Heart right ventricle (tissue), 16 donors: ENCODE measurements at regions of chr18 and their contacts with region 1.

Region 1: DNA sequence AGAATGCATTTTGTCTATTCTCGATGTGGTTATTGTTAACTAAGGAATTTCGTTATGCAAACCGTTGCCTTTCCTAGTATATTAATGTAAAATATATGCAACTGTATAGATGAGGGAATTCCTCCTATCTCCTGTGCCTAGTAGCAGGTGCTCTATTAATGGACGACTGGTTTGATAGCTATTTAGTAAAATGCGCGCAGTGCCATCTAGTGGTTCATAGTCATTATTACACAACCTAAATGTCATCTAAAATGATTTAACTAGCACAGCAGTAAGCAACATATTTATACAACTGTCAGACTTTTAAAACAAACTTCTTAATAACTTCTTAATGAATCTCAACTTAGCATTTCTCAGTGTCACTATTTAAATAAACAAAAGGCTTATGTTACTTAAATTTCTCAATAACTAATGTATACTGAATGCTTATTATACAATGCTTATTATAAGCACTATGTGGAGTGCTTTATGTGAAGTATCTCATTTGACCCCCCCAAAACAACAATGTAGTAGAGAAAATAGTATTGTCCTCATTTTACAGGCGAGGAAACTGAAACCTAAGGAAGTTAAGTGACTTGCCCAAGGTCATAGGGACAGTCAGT is 77.9 kb downstream of the DTNA start:
- DNase-seq: peak in 1 of 2 donors; percentile 40
- ATAC-seq: peak in 5 of 8 donors; percentile 66 to 74 (median 70)
- H3K4me3 ChIP-seq: no peak overlapping the region
- H3K27ac ChIP-seq: no peak overlapping the region
- H3K4me1 ChIP-seq: peaks cover 0 to 5% (median 0%) of the 10 kb centered on the region in 9 donors
- H3K27me3 ChIP-seq: no peaks in the 10 kb centered on the region
- CTCF ChIP-seq: peak; percentile 68 to 84 (median 77)

Region 2: DNA sequence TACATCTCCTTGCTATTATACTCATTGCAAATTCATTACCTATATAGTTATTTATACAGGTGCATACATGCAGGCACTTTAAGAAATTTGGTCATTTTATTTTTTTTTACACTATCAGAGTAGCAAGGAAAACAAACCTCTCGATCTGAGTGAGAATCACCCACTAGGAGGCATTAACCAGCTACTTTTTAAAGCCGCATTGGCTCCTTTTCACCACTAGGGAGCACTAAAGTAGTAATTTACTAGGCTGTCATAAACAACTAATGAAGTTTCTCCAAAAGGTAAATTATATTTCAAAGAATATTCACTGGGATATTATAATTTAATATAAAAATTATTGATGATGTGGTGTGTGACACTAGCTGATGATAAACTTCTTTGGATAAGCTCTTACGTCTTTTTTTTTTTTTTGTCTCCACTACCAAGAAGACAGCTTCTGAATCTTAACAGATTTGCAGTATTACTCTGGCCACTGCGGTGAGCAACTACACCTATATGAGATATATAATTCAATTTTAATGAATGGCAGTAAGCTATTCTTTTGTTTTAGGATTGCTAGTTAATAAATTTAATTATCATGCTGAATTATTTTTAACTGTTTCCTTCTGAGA is 665.2 kb before region 1 on chr18:
- intact Hi-C with region 1: loop called in 6 of 10 experiments (anchors 5 to 10 kb)
- DNase-seq: peak in 1 of 2 donors; percentile 7
- ATAC-seq: peak in 1 of 8 donors; percentile 61
- H3K4me3 ChIP-seq: no peak overlapping the region
- H3K27ac ChIP-seq: no peak overlapping the region
- H3K4me1 ChIP-seq: no peaks in the 10 kb centered on the region
- H3K27me3 ChIP-seq: no peaks in the 10 kb centered on the region
- CTCF ChIP-seq: peak; percentile 46 to 93 (median 79)

Region 3: GRCh38 chr18:34493099-34493544 is 294.9 kb before region 1 on chr18:
- intact Hi-C with region 1: loop called in 6 of 10 experiments (anchors 5 to 10 kb)
- DNase-seq: peak; percentile 74 to 85
- ATAC-seq: peak; percentile 87 to 96 (median 93)
- H3K4me3 ChIP-seq: peak overlapping the region; percentile 42 to 69 (median 65)
- H3K27ac ChIP-seq: peak overlapping the region; percentile 71 to 91 (median 84)
- H3K4me1 ChIP-seq: peaks cover 0 to 28% (median 10%) of the 10 kb centered on the region in 9 donors
- H3K27me3 ChIP-seq: peaks cover 0 to 40% (median 0%) of the 10 kb centered on the region in 7 donors
- CTCF ChIP-seq: no peak

Region 4: DNA sequence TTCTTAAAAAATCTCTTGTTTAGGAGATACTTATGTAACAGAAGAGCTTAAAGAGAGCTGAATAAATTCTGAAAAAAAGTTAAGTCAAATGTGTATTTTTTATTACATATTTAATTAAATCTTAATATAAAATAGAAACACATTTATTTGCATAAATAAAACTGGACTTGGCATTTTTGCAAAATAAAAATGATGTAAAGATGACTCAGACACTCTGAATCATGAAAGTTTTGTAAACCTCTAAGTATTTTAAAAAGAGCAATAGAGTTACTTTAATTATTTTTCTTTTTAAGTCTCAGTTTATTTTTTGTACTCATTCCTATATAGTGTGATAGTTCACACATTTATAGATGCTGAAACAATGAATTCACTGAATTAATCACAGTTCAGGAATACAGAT is 187.9 kb before region 1 on chr18:
- intact Hi-C with region 1: loop called in 4 of 10 experiments (anchors 5 to 10 kb)
- DNase-seq: no peak
- ATAC-seq: no peak
- H3K4me3 ChIP-seq: no peak overlapping the region
- H3K27ac ChIP-seq: no peak overlapping the region
- H3K4me1 ChIP-seq: peaks cover 0 to 27% (median 5%) of the 10 kb centered on the region in 9 donors
- H3K27me3 ChIP-seq: no peaks in the 10 kb centered on the region
- CTCF ChIP-seq: no peak

Region 5: DNA sequence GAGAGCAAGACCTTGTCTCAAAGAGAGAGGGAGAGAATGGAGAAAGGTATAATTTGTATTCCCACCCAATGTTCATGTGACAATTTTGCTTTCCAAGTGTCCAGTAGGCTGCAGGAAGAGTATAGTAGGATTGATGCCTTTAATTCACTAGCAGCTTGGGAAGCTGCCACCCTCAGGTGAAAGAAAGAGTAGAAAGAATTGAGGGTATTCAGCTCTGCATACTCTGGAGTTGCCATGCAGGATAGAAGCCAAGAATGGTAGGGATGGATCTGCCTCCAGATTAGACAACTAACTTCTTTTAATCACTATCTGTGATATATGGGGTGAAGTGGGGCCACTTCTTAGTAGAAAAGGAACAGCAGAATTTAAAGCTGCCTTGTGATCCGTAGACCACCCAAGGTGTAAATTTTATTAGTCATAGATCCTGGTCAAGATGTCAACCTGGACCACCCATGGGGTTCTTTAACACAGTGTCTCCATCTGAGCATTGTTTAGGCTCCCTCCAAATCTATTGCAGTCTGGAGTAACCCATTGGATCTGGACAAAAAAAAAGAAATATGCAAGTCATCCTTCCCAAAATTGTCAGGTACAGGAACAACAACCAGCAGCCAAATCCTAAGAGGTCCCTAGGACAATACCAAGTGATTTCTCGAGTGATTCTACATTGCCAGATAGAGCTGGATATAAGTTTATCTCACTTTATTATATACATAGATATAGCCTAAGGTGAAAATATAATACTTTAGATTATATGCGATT is 111.0 kb before region 1 on chr18:
- intact Hi-C with region 1: loop called in 2 of 10 experiments (anchors 10 kb)
- DNase-seq: no peak
- ATAC-seq: no peak
- H3K4me3 ChIP-seq: no peak overlapping the region
- H3K27ac ChIP-seq: no peak overlapping the region
- H3K4me1 ChIP-seq: peaks cover 0 to 14% (median 0%) of the 10 kb centered on the region in 9 donors
- H3K27me3 ChIP-seq: no peaks in the 10 kb centered on the region
- CTCF ChIP-seq: no peak

Region 6: GRCh38 chr18:34809451-34810072 is 21.5 kb after region 1 on chr18:
- intact Hi-C with region 1: no loop called
- DNase-seq: peak; percentile 29 to 41
- ATAC-seq: peak in 5 of 8 donors; percentile 34 to 70 (median 51)
- H3K4me3 ChIP-seq: no peak overlapping the region
- H3K27ac ChIP-seq: no peak overlapping the region
- H3K4me1 ChIP-seq: peaks cover 0 to 23% (median 6%) of the 10 kb centered on the region in 9 donors
- H3K27me3 ChIP-seq: no peaks in the 10 kb centered on the region
- CTCF ChIP-seq: peak; percentile 17 to 58 (median 47)

Region 7: GRCh38 chr18:35026407-35027061 is 238.5 kb after region 1 on chr18:
- intact Hi-C with region 1: no loop called
- DNase-seq: no peak
- ATAC-seq: peak in 3 of 8 donors; percentile 9 to 49 (median 30)
- H3K4me3 ChIP-seq: no peak overlapping the region
- H3K27ac ChIP-seq: no peak overlapping the region
- H3K4me1 ChIP-seq: peaks cover 8 to 49% (median 35%) of the 10 kb centered on the region in 9 donors
- H3K27me3 ChIP-seq: no peaks in the 10 kb centered on the region
- CTCF ChIP-seq: peak in 7 of 9 donors; percentile 14 to 50 (median 34)

Region 8: GRCh38 chr18:35455926-35456741 is 668.1 kb after region 1 on chr18:
- intact Hi-C with region 1: no loop called
- DNase-seq: no peak
- ATAC-seq: no peak
- H3K4me3 ChIP-seq: no peak overlapping the region
- H3K27ac ChIP-seq: peak overlapping the region in 1 of 10 donors; percentile 14
- H3K4me1 ChIP-seq: peaks cover 12 to 41% (median 32%) of the 10 kb centered on the region in 9 donors
- H3K27me3 ChIP-seq: no peaks in the 10 kb centered on the region
- CTCF ChIP-seq: no peak